ENCODE measurements at regions of chr4 and their contacts with region 1.

Region 1: GRCh38 chr4:25312496-25313200 is at the start of gene ZCCHC4:
- DNase-seq: peak; percentile 91
- CTCF ChIP-seq: peak; percentile 95

Region 2: DNA sequence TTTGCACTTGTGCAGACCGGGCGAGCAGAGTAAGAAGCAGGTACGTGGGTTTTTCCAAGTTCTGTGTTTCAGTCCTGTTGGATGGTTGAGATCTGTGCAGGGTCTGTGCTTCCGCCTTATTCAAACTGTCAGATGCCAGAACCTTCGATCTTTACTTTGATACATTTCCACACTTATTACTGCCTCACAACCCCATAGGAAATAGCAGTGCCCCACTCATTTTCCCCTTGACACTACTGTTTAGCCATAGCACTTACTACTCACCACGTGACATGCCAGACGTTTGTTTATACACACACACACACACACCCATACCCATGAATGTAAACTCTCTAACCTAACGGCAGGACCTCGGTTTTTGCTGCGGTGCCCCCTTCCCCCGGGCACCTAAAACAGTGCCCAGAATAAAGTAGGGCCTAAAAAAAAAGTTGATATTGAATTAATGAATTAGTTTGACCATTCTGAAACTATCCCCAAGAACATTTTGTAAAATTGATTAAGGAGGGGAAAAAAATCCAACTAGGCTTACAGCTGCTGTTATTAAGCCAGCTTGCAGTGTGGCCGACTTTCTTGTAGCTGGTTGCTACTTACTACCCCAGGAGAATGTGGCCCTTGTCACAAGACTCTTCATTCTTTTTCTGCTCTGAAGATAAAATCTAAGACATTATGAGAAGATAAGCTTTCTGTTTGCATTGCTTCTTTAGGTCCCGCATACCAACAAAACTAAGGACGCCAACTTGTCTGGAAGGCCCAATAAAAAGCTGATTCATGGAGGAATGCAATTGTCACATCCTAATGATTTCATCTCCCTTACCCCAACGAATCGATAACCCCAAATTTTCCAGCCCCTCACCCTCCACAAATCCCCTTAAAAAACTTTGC is 151.7 kb before region 1 on chr4:
- CTCF ChIA-PET with region 1: interaction called, 17 read pairs
- POLR2A ChIA-PET with region 1: no interaction called
- DNase-seq: no peak
- CTCF ChIP-seq: no peak

Region 3: GRCh38 chr4:25253071-25253445 is 59.6 kb before region 1 on chr4:
- CTCF ChIA-PET with region 1: interaction called, 16 read pairs
- POLR2A ChIA-PET with region 1: no interaction called
- DNase-seq: no peak
- CTCF ChIP-seq: no peak

Region 4: DNA sequence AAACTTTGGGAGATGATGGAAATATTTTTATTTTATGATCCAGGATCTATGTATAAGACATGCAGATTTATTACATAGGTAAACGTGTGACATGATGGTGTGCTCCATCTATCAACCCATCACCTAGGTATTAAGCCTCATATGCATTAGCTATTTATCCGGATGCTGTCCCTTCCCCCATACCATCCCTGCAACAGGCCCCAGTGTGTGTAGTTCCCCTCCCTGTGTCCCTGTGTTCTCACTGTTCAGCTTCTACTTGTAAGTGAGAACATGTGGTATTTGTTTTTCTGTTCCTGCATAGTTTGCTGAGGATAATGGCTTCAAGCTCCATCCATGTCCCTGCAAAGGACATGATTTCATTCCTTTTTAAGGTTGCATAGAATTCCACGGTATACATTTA is 28.2 kb before region 1 on chr4:
- CTCF ChIA-PET with region 1: interaction called, 31 read pairs
- POLR2A ChIA-PET with region 1: no interaction called
- DNase-seq: no peak
- CTCF ChIP-seq: no peak

Region 5: GRCh38 chr4:25299480-25300188 is 13.0 kb before region 1 on chr4:
- CTCF ChIA-PET with region 1: interaction called, 25 read pairs
- POLR2A ChIA-PET with region 1: no interaction called
- DNase-seq: no peak
- CTCF ChIP-seq: no peak

Region 6: DNA sequence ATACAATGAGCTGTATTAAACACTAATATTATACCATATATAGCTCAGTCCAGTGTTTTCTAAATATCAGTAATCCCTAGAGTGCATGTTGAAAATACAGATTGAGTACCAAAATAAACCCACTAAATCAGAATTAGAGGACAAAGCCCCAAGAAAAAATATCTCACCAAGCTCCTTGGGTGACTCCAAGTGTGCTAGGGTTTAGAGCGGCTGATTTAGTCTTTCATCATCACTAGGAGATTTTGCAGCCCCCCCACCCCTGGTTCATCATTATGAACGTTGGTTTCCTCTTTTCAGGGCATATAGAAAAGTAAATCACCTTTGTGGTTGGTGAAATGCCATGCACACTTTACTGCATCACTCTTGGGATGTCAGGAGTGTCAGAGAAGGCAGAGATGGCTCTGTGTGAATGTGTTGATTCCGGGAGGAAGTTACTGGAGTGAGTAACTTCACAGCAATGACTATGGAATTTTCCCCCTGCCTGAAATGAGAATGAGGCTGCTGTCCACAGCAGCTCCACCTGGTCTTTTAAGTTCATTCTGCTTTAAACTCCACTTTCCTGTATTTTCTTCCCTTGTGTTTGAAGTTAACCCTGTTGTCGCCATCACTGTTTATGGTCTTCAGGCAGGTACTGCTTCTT is 39.2 kb after region 1 on chr4:
- CTCF ChIA-PET with region 1: interaction called, 29 read pairs
- POLR2A ChIA-PET with region 1: no interaction called
- DNase-seq: no peak
- CTCF ChIP-seq: no peak

Region 7: DNA sequence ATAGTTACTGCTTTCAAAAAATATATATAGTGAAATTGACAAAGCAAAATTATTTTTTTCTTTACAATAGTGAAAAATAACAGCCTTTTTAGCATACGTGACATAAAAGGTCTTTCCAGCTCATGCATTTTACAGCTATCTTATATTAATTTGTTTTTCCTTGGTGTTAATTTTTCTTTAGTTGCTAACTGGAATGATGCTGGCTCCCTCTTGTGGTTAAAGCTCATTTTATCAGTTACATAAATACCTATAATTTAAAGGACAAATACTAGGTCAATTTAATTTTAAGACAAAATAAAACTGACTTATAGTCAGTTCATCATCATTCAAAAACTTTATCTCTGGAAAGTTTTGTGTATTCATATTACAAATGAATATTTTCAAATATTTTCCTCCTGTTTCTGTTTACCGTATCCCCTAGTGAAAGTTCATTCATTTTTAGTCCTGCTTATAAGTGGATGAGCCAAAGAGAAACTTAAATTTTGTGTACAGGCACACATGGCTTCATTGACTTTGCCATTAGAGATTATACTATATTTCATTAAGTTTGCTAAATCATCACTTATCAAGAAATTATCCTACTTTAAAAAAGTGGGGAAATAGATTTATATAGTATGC is 54.5 kb after region 1 on chr4:
- CTCF ChIA-PET with region 1: interaction called, 46 read pairs
- POLR2A ChIA-PET with region 1: no interaction called
- DNase-seq: peak; percentile 33
- CTCF ChIP-seq: peak; percentile 59

Measured in GM10248 (cell line).